Activated CD4-positive, alpha-beta T cell treated with anti-CD3 and anti-CD28 coated beads, Interleukin-2, amount 10 ng/mL, durations not matched to agents 24 days and 14 days (primary cell): ENCODE measurements at regions of chr4 and their contacts with region 1.

Region 1: DNA sequence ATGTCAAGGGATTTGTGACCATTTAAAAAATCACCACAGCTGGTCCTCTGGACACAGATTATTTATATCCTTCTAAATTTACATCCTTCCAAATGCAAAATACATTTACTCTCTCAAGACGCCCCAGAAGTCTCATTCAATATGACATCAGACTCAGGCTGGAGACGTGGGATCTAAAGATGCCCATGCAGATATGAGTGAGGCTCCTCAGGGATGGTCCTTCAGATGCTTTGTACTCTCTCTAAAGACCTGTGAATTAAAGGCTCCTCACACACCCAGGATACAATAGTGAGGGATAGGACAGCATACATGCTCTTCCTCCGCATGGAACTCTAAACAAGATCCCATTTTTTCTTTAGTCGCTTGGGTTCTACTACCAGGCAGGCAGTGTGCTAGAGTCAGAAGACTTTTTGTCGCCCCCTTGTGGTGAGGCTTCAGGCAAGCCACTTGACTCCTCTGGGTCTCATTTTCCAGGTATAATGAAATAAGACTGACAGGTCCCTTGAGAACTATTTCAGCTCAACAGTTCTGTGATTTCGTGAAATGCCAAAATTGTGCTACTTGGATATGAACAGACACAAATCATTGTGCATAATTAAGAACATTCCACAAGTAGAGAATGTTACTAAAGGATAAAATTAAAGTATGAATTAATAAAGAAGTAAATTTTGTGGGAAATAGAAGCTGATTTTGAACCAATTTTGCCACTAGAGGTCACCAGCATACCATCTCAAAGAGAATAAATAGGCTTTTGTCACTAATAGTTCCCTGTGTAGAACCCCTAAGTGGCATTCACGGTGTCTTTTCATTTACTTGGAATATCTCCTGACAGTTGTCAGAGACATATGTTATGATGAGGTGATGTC is 13.7 kb upstream of the SCOC start:
- DNase-seq: peak; percentile 93
- H3K4me3 Mint-ChIP-seq: no peak overlapping the region
- H3K27ac Mint-ChIP-seq: no peak overlapping the region
- H3K4me1 Mint-ChIP-seq: no peaks in the 10 kb centered on the region
- H3K27me3 Mint-ChIP-seq: peaks cover 20% of the 10 kb centered on the region

Region 2: GRCh38 chr4:139734875-139735380 is 624.9 kb before region 1 on chr4:
- intact Hi-C with region 1: loop called (anchors 10 kb)
- DNase-seq: peak; percentile 86
- H3K4me3 Mint-ChIP-seq: peak overlapping the region; percentile 76
- H3K27ac Mint-ChIP-seq: peak overlapping the region; percentile 43
- H3K4me1 Mint-ChIP-seq: peaks cover 7% of the 10 kb centered on the region
- H3K27me3 Mint-ChIP-seq: peaks cover 53% of the 10 kb centered on the region

Region 3: GRCh38 chr4:140012688-140013486 is 346.9 kb before region 1 on chr4:
- intact Hi-C with region 1: loop called (anchors 1 kb)
- DNase-seq: peak; percentile 86
- H3K4me3 Mint-ChIP-seq: no peak overlapping the region
- H3K27ac Mint-ChIP-seq: no peak overlapping the region
- H3K4me1 Mint-ChIP-seq: peaks cover 6% of the 10 kb centered on the region
- H3K27me3 Mint-ChIP-seq: peaks cover 34% of the 10 kb centered on the region

Region 4: DNA sequence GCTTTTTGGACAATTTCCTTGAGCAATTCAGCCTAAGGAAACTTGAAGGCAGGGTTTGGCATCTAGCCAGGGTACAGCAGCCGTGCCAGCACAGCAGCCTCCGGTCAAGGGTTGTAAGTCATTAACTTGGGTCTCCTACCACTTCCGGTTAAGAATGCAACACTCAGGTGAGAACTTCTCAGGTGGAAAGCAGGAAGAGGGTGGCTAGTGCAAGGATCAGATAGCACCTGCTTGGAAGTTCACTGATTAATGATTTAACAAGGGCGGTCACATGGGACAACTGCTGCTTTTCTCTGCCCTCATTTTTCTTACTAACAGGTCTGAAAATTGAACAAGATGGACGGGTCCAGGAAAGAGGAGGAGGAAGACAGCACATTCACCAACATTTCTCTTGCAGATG is 16.5 kb before region 1 on chr4:
- intact Hi-C with region 1: no loop called
- DNase-seq: no peak
- H3K4me3 Mint-ChIP-seq: no peak overlapping the region
- H3K27ac Mint-ChIP-seq: no peak overlapping the region
- H3K4me1 Mint-ChIP-seq: peaks cover 2% of the 10 kb centered on the region
- H3K27me3 Mint-ChIP-seq: peaks cover 15% of the 10 kb centered on the region

Region 5: GRCh38 chr4:140609548-140610425 is 250.0 kb after region 1 on chr4:
- intact Hi-C with region 1: loop called (anchors 1 kb)
- DNase-seq: no peak
- H3K4me3 Mint-ChIP-seq: no peak overlapping the region
- H3K27ac Mint-ChIP-seq: no peak overlapping the region
- H3K4me1 Mint-ChIP-seq: no peaks in the 10 kb centered on the region
- H3K27me3 Mint-ChIP-seq: peaks cover 15% of the 10 kb centered on the region

Region 6: DNA sequence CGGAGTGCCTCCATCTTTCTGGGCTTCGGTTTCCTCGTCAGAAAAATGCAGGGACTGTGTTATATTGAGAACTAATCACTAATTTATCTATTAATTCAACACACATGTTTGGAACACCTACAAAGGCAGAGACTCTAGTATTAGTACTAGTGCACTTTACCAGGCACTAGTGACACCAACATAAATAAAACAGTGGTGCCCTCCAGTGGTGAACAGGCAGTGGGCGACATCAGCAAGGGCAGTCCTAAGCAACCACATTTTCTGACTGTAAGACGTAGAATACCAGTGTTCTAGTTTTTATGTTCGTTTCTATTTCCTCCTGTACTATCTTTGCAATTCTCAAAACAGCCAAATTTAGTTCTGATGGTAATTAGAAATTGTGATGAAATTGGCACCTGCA is 278.0 kb after region 1 on chr4:
- intact Hi-C with region 1: loop called (anchors 1 kb)
- DNase-seq: peak; percentile 78
- H3K4me3 Mint-ChIP-seq: no peak overlapping the region
- H3K27ac Mint-ChIP-seq: no peak overlapping the region
- H3K4me1 Mint-ChIP-seq: no peaks in the 10 kb centered on the region
- H3K27me3 Mint-ChIP-seq: peaks cover 2% of the 10 kb centered on the region

Region 7: GRCh38 chr4:140851032-140851636 is 491.3 kb after region 1 on chr4:
- intact Hi-C with region 1: loop called (anchors 2 kb)
- DNase-seq: peak; percentile 78
- H3K4me3 Mint-ChIP-seq: no peak overlapping the region
- H3K27ac Mint-ChIP-seq: no peak overlapping the region
- H3K4me1 Mint-ChIP-seq: no peaks in the 10 kb centered on the region
- H3K27me3 Mint-ChIP-seq: peaks cover 10% of the 10 kb centered on the region